Activated CD4-positive, alpha-beta memory T cell treated with anti-CD3 and anti-CD28 coated beads for 36 hours (primary cell): ENCODE measurements at regions of chr12 and their contacts with region 1.

Region 1: DNA sequence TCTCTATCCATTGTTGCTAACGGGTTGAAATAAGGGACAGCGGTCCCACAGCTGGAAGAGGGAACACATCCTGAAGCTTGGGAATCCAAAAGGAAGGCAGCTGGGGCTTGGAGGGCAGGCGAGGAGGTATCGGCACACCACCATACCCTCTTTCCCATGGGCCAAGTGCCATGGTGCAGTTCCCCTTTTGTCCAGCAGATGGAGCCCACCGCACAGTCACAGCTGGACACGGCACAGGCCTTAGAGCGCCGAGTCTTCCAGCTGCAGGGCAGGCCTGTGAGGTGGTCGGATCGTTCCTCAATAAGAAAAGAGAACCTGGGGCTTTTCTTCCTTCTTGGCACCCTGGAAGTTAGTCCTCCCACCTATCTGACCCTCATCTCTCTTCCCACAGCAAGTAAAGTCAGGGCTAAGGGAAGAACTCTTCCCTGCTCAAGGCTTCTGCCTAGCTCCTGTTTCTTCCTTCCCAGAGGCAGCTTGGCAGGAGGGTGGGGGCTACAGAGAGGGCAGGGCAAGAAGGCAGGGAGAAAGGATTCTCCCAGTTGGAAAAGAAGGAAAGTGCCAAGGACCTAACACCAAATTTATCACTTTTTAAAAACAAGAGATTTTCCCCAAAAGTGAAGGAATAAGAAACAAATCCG is 8.6 kb downstream of the PPP1R1A start:
- DNase-seq: peak; percentile 90
- H3K4me3 Mint-ChIP-seq: no peak overlapping the region
- H3K27ac Mint-ChIP-seq: no peak overlapping the region
- H3K4me1 Mint-ChIP-seq: peaks cover 2% of the 10 kb centered on the region
- H3K27me3 Mint-ChIP-seq: peaks cover 3% of the 10 kb centered on the region

Region 2: DNA sequence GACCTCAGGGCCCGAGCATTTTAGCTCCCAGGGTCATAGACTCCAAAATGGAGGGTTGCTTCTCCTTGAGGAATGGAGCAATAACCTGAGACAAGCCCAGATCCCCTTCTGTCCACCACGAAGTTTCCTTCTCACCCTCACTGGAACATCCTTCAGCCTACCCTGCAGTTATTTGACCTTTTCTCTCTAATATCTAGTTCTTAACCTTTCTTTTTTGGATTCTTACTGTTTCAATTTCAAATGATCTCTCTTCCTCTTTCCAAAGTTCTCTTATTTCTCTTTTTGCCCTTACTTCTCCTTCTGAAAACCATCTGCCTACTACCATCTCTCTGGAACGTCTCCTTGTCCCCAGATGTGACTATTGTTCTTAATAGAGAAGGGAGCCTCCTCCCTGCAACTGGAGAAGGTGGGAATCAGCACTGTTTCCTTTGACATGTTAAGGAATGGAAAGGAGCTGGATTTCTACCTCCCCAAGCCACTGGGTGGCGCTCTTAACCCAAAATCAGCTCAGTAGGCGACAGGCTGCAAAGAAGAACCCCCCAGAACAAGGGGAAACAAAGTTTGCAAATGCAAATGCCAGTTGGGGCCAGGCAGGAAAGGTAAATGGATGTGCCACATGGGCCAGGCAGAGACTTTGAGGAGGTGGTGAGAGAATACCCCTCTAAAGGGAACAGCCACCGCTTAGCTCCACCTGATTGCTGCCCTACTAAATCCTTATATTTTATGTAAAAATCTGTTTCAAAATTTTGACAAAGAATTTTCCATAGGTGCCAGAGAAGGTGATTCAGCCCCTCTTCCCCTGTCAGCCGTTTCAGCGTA is 52.8 kb before region 1 on chr12:
- CTCF ChIA-PET with region 1: interaction called, 15 read pairs
- POLR2A ChIA-PET with region 1: no interaction called
- intact Hi-C with region 1: no loop called
- DNase-seq: peak; percentile 64
- H3K4me3 Mint-ChIP-seq: no peak overlapping the region
- H3K27ac Mint-ChIP-seq: peak overlapping the region; percentile 9
- H3K4me1 Mint-ChIP-seq: peaks cover 23% of the 10 kb centered on the region
- H3K27me3 Mint-ChIP-seq: no peaks in the 10 kb centered on the region

Region 3: DNA sequence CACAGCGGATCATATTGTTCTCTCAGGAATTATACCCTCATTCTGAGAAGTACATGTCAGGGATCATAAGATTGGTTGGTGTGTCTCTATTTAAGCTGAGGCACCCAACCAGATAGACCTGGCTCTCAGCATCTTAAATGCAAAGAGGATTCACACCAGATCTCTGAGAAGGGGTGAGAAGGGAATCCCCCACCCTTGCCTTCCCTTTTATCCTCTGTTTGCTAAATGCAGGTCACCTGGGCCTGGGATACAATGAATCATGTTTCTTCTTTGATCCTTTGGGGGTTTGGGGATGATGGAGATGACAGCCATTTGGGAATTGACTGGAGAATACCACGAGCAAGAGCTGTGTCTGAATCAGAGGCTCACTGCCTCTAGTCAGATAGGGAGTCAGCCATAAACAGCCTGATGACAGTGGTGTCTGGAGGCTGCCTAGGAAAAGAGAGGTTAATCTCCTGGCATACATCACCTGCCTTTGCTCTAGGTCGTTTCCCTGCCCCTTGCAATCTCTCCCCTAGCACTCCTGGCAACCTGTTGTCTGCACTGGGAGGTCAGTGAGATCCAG is 41.6 kb before region 1 on chr12:
- CTCF ChIA-PET with region 1: no interaction called
- POLR2A ChIA-PET with region 1: no interaction called
- intact Hi-C with region 1: no loop called
- DNase-seq: no peak
- H3K4me3 Mint-ChIP-seq: no peak overlapping the region
- H3K27ac Mint-ChIP-seq: peak overlapping the region; percentile 38
- H3K4me1 Mint-ChIP-seq: peaks cover 25% of the 10 kb centered on the region
- H3K27me3 Mint-ChIP-seq: no peaks in the 10 kb centered on the region

Region 4: DNA sequence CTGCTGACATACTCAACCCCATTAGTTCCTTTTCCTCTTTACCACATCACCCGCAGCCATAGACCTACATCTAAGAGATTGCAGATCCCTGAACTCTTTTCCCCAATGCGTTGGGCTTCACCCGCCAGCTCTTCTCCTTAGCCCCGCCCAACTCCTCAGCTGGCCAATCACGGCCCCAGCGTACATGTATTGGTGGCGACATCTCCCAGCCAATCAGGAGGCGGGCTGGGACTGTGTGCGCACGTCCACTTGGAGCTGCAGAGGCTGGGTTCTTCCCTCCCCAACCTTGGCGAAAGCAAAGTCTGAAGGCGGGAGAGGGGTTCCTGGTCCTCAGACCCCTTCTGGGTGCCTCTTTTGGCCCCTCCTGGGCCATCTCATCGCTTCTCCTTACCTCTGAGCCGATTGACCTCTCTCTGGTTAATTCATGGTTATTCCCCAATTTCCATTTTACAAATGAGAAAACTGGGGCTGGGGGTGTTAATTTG is 19.4 kb before region 1 on chr12:
- CTCF ChIA-PET with region 1: interaction called, 19 read pairs
- POLR2A ChIA-PET with region 1: no interaction called
- intact Hi-C with region 1: no loop called
- DNase-seq: peak; percentile 94
- H3K4me3 Mint-ChIP-seq: peak overlapping the region; percentile 69
- H3K27ac Mint-ChIP-seq: peak overlapping the region; percentile 74
- H3K4me1 Mint-ChIP-seq: peaks cover 23% of the 10 kb centered on the region
- H3K27me3 Mint-ChIP-seq: no peaks in the 10 kb centered on the region

Region 5: DNA sequence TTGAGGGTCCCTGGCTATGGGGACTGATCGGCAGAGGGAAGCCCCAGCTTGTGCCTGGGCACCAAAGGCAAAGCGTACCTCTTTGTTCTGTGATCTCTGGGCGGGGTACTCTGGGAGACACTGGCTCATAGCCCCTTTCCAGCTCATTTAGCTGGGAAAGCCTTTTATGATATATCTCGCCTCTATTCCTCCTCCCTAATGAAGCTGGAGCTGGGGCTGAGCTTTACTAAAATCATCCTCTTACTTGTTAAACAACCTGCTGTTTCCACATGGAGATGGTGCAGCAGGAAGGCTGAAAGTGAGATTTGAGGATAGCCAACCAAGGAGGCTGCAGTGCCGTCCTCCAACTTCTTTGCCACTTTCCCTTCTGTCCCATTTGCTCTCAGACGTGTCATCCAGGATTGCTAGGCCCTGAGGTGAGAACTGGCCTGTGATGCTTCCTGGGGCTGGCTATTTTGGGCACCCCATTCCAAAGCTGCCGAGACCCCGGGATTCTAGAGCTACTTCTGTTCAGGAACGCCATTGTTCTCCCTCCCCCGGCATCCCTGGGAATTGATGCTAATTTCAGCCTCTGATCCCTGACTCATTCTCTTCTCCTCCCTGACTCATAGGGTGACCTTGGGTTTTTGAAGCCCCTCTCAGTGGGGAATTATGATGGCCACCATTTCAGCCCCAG is 14.4 kb before region 1 on chr12:
- CTCF ChIA-PET with region 1: interaction called, 19 read pairs
- POLR2A ChIA-PET with region 1: no interaction called
- intact Hi-C with region 1: no loop called
- DNase-seq: no peak
- H3K4me3 Mint-ChIP-seq: no peak overlapping the region
- H3K27ac Mint-ChIP-seq: no peak overlapping the region
- H3K4me1 Mint-ChIP-seq: peaks cover 14% of the 10 kb centered on the region
- H3K27me3 Mint-ChIP-seq: no peaks in the 10 kb centered on the region

Region 6: DNA sequence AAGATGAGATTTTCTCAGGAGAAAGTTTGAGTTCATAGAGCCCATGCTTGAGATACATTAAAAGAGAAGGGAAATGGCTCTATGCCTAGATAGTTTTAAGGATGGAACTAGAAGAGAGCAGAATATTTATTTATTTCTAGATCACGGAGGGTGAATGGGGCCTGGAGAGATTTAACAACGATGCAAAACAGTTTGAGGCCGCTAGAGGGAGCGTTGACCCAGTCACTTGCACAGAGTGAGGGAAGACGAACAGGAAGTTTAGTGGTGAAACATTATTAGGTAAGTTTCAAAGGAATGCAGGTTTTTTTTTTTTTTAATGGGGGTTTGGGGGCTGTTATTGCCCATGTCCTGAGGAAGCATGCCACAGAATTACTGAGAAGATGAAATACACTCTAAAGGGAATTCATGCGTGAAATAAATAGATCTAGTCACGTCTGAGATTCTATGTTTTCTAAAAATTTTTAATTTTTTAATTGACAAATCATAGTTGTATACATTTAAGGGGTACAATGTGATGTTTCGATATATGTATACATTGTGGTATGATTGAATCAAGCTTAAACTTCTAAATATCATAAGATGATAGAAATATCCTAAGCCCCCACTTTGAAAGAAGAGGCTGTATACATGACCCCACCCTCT is 23.5 kb after region 1 on chr12:
- CTCF ChIA-PET with region 1: interaction called, 95 read pairs
- POLR2A ChIA-PET with region 1: no interaction called
- intact Hi-C with region 1: no loop called
- DNase-seq: peak; percentile 78
- H3K4me3 Mint-ChIP-seq: no peak overlapping the region
- H3K27ac Mint-ChIP-seq: no peak overlapping the region
- H3K4me1 Mint-ChIP-seq: peaks cover 6% of the 10 kb centered on the region
- H3K27me3 Mint-ChIP-seq: peaks cover 4% of the 10 kb centered on the region

Region 7: GRCh38 chr12:54658306-54659264 is 78.8 kb after region 1 on chr12:
- CTCF ChIA-PET with region 1: interaction called, 11 read pairs
- POLR2A ChIA-PET with region 1: no interaction called
- intact Hi-C with region 1: no loop called
- DNase-seq: peak; percentile 64
- H3K4me3 Mint-ChIP-seq: no peak overlapping the region
- H3K27ac Mint-ChIP-seq: no peak overlapping the region
- H3K4me1 Mint-ChIP-seq: no peaks in the 10 kb centered on the region
- H3K27me3 Mint-ChIP-seq: peaks cover 8% of the 10 kb centered on the region